Transverse colon (tissue), 4 donors: ENCODE measurements at regions of chr7 and their contacts with region 1.

Region 1: GRCh38 chr7:93055543-93056107 is 62.2 kb downstream of the SAMD9 start:
- DNase-seq: no peak
- H3K4me3 ChIP-seq: no peak overlapping the region
- H3K27ac ChIP-seq: no peak overlapping the region
- H3K4me1 ChIP-seq: peaks cover 0 to 27% (median 3%) of the 10 kb centered on the region in 4 donors
- H3K27me3 ChIP-seq: no peaks in the 10 kb centered on the region
- CTCF ChIP-seq: peak; percentile 72 to 86 (median 83)
- EP300 ChIP-seq: no peak
- POLR2A ChIP-seq: no peak

Region 2: GRCh38 chr7:92528188-92528957 is 527.3 kb before region 1 on chr7 and contains the starts of genes PEX1 and RBM48:
- in situ Hi-C with region 1: no loop called
- intact Hi-C with region 1: loop called (anchors 10 kb)
- DNase-seq: peak; percentile 97
- H3K4me3 ChIP-seq: peak within 1 kb of the TSS; percentile 59 to 96 (median 82)
- H3K27ac ChIP-seq: peak within 1 kb of the TSS; percentile 86 to 94 (median 90)
- H3K4me1 ChIP-seq: peaks cover 6 to 24% (median 14%) of the 10 kb centered on the region in 4 donors
- H3K27me3 ChIP-seq: no peaks in the 10 kb centered on the region
- CTCF ChIP-seq: peak in 2 of 5 experiments; percentile 26 to 28
- EP300 ChIP-seq: no peak
- POLR2A ChIP-seq: peak; percentile 66
- total RNA-seq, gene PEX1: 17.2 to 29.6 (median 23.1) TPM
- total RNA-seq, gene RBM48: 11.5 to 19.8 (median 16.0) TPM

Region 3: DNA sequence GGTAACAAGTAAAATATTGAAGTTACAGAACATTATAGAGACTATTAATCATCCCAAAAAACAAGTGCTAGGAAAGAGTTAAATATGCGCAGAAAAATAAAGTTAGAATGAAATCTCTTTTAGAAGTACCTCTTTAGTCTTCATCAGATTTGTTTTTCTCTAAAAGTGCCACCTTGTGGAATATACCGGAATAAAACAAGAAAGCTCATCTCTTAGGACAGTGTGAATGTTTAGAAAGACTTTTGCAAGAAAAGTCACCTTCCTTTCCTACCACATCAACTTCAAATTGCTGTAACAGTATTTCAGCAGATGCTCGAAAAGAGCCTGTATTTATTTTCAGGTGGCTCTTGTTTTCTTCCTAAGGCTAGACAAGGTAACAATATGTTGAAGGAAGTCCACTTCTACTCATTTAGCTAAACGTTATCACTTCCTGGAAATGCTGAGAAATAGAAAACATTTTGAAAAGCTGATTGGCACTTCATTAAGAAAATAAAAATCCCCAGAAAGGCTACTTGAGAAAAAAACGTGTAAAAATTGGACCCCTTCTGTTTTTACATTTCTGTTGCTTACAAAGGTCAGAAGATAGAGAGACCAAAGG is 445.6 kb before region 1 on chr7:
- in situ Hi-C with region 1: loop called in 3 of 4 experiments (anchors 10 to 25 kb)
- intact Hi-C with region 1: no loop called
- DNase-seq: no peak
- H3K4me3 ChIP-seq: no peak overlapping the region
- H3K27ac ChIP-seq: no peak overlapping the region
- H3K4me1 ChIP-seq: peaks cover 0 to 14% (median 6%) of the 10 kb centered on the region in 4 donors
- H3K27me3 ChIP-seq: no peaks in the 10 kb centered on the region
- CTCF ChIP-seq: peak; percentile 34 to 39 (median 36)
- EP300 ChIP-seq: no peak
- POLR2A ChIP-seq: no peak

Region 4: DNA sequence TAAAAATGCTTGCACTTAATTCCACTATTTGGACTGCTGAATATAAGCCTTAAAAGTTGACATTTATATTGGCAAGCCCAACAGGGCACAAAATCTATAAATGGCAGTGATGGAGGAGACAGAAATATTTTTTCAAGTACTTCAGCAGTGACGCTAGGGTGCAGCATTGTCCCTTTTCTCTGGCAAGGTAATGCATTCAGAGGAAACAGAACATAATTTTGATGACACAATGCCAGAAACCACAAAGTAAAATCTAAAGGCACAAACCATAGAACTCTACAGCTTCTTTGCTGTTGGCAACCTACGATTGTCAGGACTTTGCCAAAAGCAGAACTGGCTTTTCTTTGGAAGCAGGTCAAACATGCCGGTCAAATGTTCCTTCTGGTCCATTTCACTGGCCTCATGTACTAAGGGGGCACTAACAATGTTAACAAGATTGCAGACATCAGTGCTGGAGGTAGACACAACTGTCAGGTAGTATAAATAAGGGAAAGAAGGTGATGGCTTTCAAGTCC is 434.5 kb before region 1 on chr7:
- in situ Hi-C with region 1: loop called (anchors 10 to 25 kb)
- intact Hi-C with region 1: loop called (anchors 10 kb)
- DNase-seq: peak; percentile 76
- H3K4me3 ChIP-seq: no peak overlapping the region
- H3K27ac ChIP-seq: peak overlapping the region; percentile 35 to 58 (median 52)
- H3K4me1 ChIP-seq: peaks cover 0 to 21% (median 9%) of the 10 kb centered on the region in 4 donors
- H3K27me3 ChIP-seq: no peaks in the 10 kb centered on the region
- CTCF ChIP-seq: peak; percentile 69 to 88 (median 80)
- EP300 ChIP-seq: no peak
- POLR2A ChIP-seq: no peak

Region 5: DNA sequence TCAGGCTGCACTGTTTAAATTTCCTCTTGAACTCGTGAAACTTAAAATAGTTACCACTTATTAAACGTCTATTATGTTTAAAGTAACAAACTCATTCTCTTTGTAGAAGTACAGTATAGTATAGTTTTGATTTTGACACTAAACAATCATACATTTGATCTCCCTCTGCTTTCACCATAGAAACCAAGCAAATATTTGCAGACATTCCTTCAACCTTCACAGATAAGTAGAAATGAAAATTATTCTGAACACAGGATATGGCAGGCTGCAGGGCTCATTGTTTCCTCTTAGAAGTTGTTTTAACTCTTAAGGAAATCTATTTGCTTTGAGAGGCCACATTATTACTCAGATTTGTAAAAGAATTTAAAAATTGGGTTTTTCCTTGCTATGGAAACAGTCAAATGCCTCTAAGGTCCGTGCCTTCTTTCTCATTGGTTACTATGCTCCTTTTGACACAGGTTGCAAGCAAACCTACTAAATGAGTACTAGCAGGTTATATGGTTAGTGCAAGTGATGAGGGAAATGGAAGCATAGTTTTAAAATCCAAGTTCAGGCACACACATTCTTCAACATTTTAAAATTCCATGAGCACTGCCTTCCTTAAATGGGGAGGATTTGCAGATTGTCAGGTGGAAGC is 372.6 kb before region 1 on chr7:
- in situ Hi-C with region 1: loop called in 2 of 4 experiments (anchors 10 kb)
- intact Hi-C with region 1: no loop called
- DNase-seq: no peak
- H3K4me3 ChIP-seq: no peak overlapping the region
- H3K27ac ChIP-seq: peak overlapping the region; percentile 5 to 19 (median 14)
- H3K4me1 ChIP-seq: peaks cover 14 to 28% (median 22%) of the 10 kb centered on the region in 4 donors
- H3K27me3 ChIP-seq: no peaks in the 10 kb centered on the region
- CTCF ChIP-seq: no peak
- EP300 ChIP-seq: no peak
- POLR2A ChIP-seq: no peak

Region 6: GRCh38 chr7:92973974-92974373 is 81.7 kb before region 1 on chr7:
- in situ Hi-C with region 1: no loop called
- intact Hi-C with region 1: no loop called
- DNase-seq: no peak
- H3K4me3 ChIP-seq: no peak overlapping the region
- H3K27ac ChIP-seq: no peak overlapping the region
- H3K4me1 ChIP-seq: no peaks in the 10 kb centered on the region
- H3K27me3 ChIP-seq: no peaks in the 10 kb centered on the region
- CTCF ChIP-seq: no peak
- EP300 ChIP-seq: no peak
- POLR2A ChIP-seq: no peak

Region 7: GRCh38 chr7:93307131-93307660 is 251.6 kb after region 1 on chr7:
- in situ Hi-C with region 1: no loop called
- intact Hi-C with region 1: no loop called
- DNase-seq: no peak
- H3K4me3 ChIP-seq: no peak overlapping the region
- H3K27ac ChIP-seq: no peak overlapping the region
- H3K4me1 ChIP-seq: no peaks in the 10 kb centered on the region
- H3K27me3 ChIP-seq: no peaks in the 10 kb centered on the region
- CTCF ChIP-seq: no peak
- EP300 ChIP-seq: no peak
- POLR2A ChIP-seq: no peak

Region 8: DNA sequence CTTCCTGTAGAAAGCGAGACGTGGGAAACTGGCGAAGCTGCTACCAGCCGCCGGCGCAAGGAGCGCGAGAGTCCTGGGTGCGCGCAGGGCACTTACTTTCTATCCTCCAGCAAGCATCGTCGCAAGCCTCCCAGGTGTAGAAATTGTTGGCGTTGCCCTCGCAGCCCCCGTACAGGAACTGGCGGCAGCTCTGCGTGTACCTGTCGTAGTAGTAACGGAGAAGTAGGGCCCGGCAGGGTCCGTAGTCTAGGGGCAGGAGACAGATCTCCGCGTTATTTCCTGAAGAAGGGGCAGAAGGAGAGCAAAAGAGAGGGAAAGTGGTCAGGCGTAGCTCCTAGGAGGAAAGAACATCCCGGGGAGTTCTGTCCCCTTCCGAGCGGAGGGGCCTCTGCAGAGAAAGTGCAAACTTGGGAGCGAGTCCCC is 834.4 kb after region 1 on chr7:
- in situ Hi-C with region 1: no loop called
- intact Hi-C with region 1: no loop called
- DNase-seq: no peak
- H3K4me3 ChIP-seq: peak overlapping the region; percentile 14 to 53 (median 34)
- H3K27ac ChIP-seq: peak overlapping the region in 3 of 4 donors; percentile 10 to 44 (median 40)
- H3K4me1 ChIP-seq: peaks cover 0 to 5% (median 0%) of the 10 kb centered on the region in 4 donors
- H3K27me3 ChIP-seq: peaks cover 27% of the 10 kb centered on the region
- CTCF ChIP-seq: no peak
- EP300 ChIP-seq: no peak
- POLR2A ChIP-seq: no peak